CD4-positive, alpha-beta memory T cell (primary cell): ENCODE measurements at regions of chr19 and their contacts with region 1.

Region 1: DNA sequence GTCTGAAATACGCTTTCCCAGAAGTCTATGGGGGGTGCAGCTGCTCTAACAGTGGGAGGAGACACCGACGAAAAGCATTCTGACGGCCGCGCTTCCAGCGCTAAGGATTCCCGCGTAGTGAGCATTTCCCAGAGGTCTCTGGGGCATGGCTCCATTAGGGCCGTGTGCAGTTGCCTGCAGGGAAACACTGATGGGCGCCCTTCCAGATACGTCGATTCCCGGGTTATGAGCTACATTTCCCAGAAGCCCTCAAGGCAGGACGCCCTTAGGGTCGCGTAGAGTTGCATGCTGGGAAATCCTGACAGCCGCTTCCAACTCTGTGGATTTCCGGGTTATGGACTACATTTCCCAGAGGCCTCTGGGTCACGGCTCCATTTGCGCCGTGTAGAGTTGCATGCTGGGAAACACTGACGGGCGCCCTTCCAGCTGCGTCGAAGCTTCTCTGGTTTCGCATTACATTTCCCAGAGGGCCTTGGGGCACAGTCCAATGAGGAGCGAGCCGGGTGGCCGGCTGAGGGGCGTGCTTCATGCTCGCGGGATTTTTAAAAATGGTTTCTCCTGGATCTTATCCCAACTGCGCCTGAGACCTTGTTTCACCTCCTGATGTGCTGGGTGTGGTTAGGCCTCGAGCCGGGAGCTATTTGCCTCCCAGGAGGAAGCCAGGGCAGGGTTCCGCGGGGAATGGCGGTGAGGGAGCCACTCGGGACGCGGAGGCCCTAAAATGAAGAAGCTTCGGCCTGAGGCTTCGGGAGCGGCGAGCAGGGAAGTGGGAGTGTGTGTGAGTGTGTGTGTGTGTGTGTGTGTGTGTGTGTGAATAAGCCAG is 17.2 kb upstream of the ZNF331 start:
- DNase-seq: peak; percentile 84 to 93 (median 91)
- H3K4me3 ChIP-seq: peak overlapping the region; percentile 53 to 79
- H3K4me3 Mint-ChIP-seq: peak overlapping the region; percentile 90 to 100 (median 98)
- H3K27ac ChIP-seq: peak overlapping the region; percentile 58
- H3K27ac Mint-ChIP-seq: peak overlapping the region; percentile 90 to 98 (median 93)
- H3K4me1 ChIP-seq: peaks cover 12% of the 10 kb centered on the region
- H3K4me1 Mint-ChIP-seq: peaks cover 15 to 21% (median 16%) of the 10 kb centered on the region in 4 donors
- H3K27me3 ChIP-seq: no peaks in the 10 kb centered on the region
- H3K27me3 Mint-ChIP-seq: no peaks in the 10 kb centered on the region

Region 2: DNA sequence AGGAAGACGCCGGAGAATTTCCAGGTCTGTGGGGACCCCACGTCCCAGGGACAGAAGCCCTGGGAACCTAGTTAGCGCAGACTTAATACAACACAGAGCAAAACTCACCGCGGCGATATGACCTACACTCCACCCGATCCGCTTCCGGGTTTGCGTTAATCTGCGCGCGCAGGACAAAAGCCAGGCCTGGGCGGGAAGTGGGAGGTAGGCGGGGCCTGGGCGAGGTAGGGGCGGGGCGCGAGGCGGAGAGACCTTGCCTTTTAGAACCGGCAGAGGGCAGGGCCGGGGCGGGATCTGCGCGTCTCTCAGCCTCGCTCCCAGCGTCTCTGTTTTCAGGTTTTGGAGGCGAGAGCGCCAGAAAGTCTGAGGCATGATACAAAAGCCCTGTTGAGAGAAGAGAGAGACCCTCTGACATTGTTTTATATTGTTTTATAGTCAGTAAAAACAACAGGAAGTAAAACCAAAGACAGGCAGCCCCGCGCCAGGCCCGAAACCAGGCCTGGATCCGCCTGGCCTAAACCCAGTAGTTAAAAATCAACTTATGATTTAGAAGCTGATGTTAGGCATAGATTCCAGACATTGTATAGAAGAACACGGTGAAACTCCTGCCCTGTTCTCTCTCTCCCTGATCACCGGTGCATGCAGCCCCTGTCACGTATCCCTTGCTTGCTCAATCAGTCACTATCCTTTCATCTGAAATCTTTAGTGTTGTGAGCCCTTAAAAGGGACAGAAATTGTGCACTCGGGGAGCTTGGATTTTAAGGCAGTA is 785.7 kb before region 1 on chr19 and contains the start of gene ZNF611:
- CTCF ChIA-PET with region 1: no interaction called
- POLR2A ChIA-PET with region 1: no interaction called
- intact Hi-C with region 1: loop called (anchors 1 kb)
- DNase-seq: peak; percentile 98 to 99 (median 98)
- H3K4me3 ChIP-seq: peak within 1 kb of the TSS; percentile 94 to 98
- H3K4me3 Mint-ChIP-seq: peak within 1 kb of the TSS; percentile 90 to 97 (median 94)
- H3K27ac ChIP-seq: peak within 1 kb of the TSS; percentile 80
- H3K27ac Mint-ChIP-seq: peak within 1 kb of the TSS; percentile 94 to 98 (median 97)
- H3K4me1 ChIP-seq: peaks cover 22% of the 10 kb centered on the region
- H3K4me1 Mint-ChIP-seq: peaks cover 17 to 34% (median 25%) of the 10 kb centered on the region in 4 donors
- H3K27me3 ChIP-seq: no peaks in the 10 kb centered on the region
- H3K27me3 Mint-ChIP-seq: no peaks in the 10 kb centered on the region
- total RNA-seq, gene ZNF611: 52.8 to 53.7 TPM

Region 3: GRCh38 chr19:53237114-53237777 is 283.5 kb before region 1 on chr19:
- CTCF ChIA-PET with region 1: no interaction called
- POLR2A ChIA-PET with region 1: no interaction called
- intact Hi-C with region 1: no loop called
- DNase-seq: no peak
- H3K4me3 ChIP-seq: no peak overlapping the region
- H3K4me3 Mint-ChIP-seq: no peak overlapping the region
- H3K27ac ChIP-seq: no peak overlapping the region
- H3K27ac Mint-ChIP-seq: no peak overlapping the region
- H3K4me1 ChIP-seq: no peaks in the 10 kb centered on the region
- H3K4me1 Mint-ChIP-seq: no peaks in the 10 kb centered on the region
- H3K27me3 ChIP-seq: no peaks in the 10 kb centered on the region
- H3K27me3 Mint-ChIP-seq: no peaks in the 10 kb centered on the region

Region 4: DNA sequence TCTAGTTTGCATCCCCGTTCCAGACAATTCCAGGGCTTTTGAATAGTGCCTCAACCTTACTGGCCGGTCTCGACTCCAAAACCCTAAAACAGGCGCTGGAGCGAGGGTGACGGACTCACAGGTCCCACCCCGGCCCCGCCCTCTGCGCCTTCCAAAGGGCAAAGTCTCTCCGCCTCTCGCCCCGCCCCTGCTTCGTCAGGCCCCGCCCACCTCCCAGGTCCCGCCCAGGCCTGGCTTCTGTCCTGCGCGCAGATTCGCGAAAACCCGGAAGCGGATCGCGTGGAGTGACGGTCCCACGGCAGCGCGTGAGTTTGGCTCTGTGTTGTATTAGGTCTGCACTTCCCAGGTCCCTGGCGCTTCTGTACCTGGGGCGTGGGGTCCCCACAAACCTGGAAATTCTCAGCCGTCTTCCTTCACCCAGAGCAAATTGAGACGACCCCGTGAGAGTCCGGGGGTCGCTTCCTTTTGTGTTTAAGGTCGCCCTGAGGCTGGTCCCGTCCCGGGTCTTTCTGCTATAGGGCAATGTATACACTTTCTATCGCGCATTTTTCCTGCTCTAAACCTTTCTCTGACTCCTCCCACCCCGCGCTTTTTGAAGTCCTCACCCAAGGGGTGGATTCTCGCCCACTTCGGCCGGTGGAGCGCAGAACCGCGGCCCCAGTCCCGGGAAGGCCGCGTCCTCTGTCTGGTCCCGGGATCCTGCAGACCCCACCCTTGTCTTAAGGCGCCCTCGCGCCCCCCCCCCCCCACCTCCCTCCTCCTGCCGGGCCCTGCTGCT is 53.1 kb before region 1 on chr19 and contains the start of gene ZNF813:
- CTCF ChIA-PET with region 1: no interaction called
- POLR2A ChIA-PET with region 1: no interaction called
- intact Hi-C with region 1: loop called (anchors 2 kb)
- DNase-seq: peak; percentile 88 to 96 (median 91)
- H3K4me3 ChIP-seq: peak within 1 kb of the TSS; percentile 57 to 62
- H3K4me3 Mint-ChIP-seq: peak within 1 kb of the TSS; percentile 89 to 96 (median 93)
- H3K27ac ChIP-seq: peak within 1 kb of the TSS; percentile 51
- H3K27ac Mint-ChIP-seq: peak within 1 kb of the TSS; percentile 83 to 94 (median 91)
- H3K4me1 ChIP-seq: peaks cover 13% of the 10 kb centered on the region
- H3K4me1 Mint-ChIP-seq: peaks cover 14 to 45% (median 25%) of the 10 kb centered on the region in 4 donors
- H3K27me3 ChIP-seq: no peaks in the 10 kb centered on the region
- H3K27me3 Mint-ChIP-seq: peaks cover 8 to 9% of the 10 kb centered on the region in 2 donors
- total RNA-seq, gene ZNF813: 9.4 to 10.1 TPM

Region 5: GRCh38 chr19:53504885-53505284 is 15.9 kb before region 1 on chr19:
- CTCF ChIA-PET with region 1: no interaction called
- POLR2A ChIA-PET with region 1: no interaction called
- intact Hi-C with region 1: no loop called
- DNase-seq: no peak
- H3K4me3 ChIP-seq: no peak overlapping the region
- H3K4me3 Mint-ChIP-seq: no peak overlapping the region
- H3K27ac ChIP-seq: no peak overlapping the region
- H3K27ac Mint-ChIP-seq: no peak overlapping the region
- H3K4me1 ChIP-seq: no peaks in the 10 kb centered on the region
- H3K4me1 Mint-ChIP-seq: no peaks in the 10 kb centered on the region
- H3K27me3 ChIP-seq: peaks cover 3% of the 10 kb centered on the region
- H3K27me3 Mint-ChIP-seq: peaks cover 3 to 9% of the 10 kb centered on the region in 2 donors

Region 6: GRCh38 chr19:53553884-53554791 is 33.4 kb after region 1 on chr19:
- CTCF ChIA-PET with region 1: no interaction called
- POLR2A ChIA-PET with region 1: interaction called, 3 read pairs
- intact Hi-C with region 1: loop called (anchors 1 kb)
- DNase-seq: peak; percentile 91 to 97 (median 96)
- H3K4me3 ChIP-seq: peak overlapping the region; percentile 36 to 66
- H3K4me3 Mint-ChIP-seq: peak overlapping the region; percentile 97 to 99 (median 98)
- H3K27ac ChIP-seq: peak overlapping the region; percentile 94
- H3K27ac Mint-ChIP-seq: peak overlapping the region; percentile 98 to 100 (median 100)
- H3K4me1 ChIP-seq: peaks cover 14% of the 10 kb centered on the region
- H3K4me1 Mint-ChIP-seq: peaks cover 11 to 33% (median 21%) of the 10 kb centered on the region in 4 donors
- H3K27me3 ChIP-seq: no peaks in the 10 kb centered on the region
- H3K27me3 Mint-ChIP-seq: no peaks in the 10 kb centered on the region